ENCODE measurements at regions of chr3 and their contacts with region 1.

Region 1: DNA sequence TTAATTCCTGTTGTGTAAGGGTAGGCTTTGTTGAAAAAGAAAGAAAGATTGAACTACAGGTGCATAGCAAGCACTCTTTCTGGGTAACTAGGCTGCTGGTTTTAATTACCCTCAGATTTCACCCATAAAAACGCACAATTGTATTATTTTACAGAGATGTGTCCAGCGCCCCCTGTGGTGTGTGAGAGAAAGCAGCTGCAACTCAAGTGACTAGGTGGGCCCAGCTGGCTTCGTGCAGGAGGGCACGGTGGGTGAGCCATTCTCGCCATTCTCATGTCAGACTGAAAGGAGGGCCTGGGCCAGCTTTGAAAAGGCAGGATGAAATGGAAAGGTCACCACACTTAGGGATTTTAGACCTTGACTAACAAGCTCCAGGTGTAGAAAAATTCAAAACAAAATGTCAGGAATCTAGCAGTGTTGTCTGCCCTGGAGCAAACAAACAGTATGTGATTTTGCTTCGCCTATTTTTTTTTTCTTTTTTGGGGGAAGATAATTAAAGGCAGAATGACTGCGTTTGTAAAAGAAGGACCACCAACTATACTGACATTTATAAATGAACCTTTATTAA is 122.5 kb downstream of the LRIG1 start:
- DNase-seq: peak; percentile 60
- H3K4me3 ChIP-seq: no peak overlapping the region
- H3K27ac ChIP-seq: no peak overlapping the region; a peak in 1 of 4 replicates
- H3K4me1 ChIP-seq: peaks cover 0 to 10% of the 10 kb centered on the region in 2 experiments; a peak in 1 of 4 replicates
- H3K27me3 ChIP-seq: no peaks in the 10 kb centered on the region
- CTCF ChIP-seq: peak; percentile 68
- EP300 ChIP-seq: no peak
- RAD21 ChIP-seq: peak; percentile 49

Region 2: GRCh38 chr3:66362541-66362941 is 15.8 kb before region 1 on chr3:
- CTCF ChIA-PET with region 1: interaction called, 23 read pairs
- POLR2A ChIA-PET with region 1: no interaction called
- DNase-seq: no peak
- H3K4me3 ChIP-seq: no peak overlapping the region
- H3K27ac ChIP-seq: no peak overlapping the region
- H3K4me1 ChIP-seq: peaks cover 0 to 5% of the 10 kb centered on the region in 2 experiments; a peak in 1 of 4 replicates
- H3K27me3 ChIP-seq: no peaks in the 10 kb centered on the region
- CTCF ChIP-seq: no peak
- EP300 ChIP-seq: no peak
- RAD21 ChIP-seq: no peak

Region 3: GRCh38 chr3:66367979-66368378 is 10.4 kb before region 1 on chr3:
- CTCF ChIA-PET with region 1: interaction called, 23 read pairs
- POLR2A ChIA-PET with region 1: no interaction called
- DNase-seq: no peak
- H3K4me3 ChIP-seq: no peak overlapping the region
- H3K27ac ChIP-seq: no peak overlapping the region
- H3K4me1 ChIP-seq: peaks cover 0 to 15% of the 10 kb centered on the region in 2 experiments; a peak in 1 of 4 replicates
- H3K27me3 ChIP-seq: no peaks in the 10 kb centered on the region
- CTCF ChIP-seq: no peak
- EP300 ChIP-seq: no peak
- RAD21 ChIP-seq: no peak

Region 4: GRCh38 chr3:66394019-66394752 is 15.8 kb after region 1 on chr3:
- CTCF ChIA-PET with region 1: interaction called, 12 read pairs
- POLR2A ChIA-PET with region 1: no interaction called
- DNase-seq: no peak
- H3K4me3 ChIP-seq: no peak overlapping the region
- H3K27ac ChIP-seq: no peak overlapping the region
- H3K4me1 ChIP-seq: peaks cover 0 to 9% of the 10 kb centered on the region in 2 experiments; a peak in 2 of 4 replicates
- H3K27me3 ChIP-seq: no peaks in the 10 kb centered on the region
- CTCF ChIP-seq: no peak
- EP300 ChIP-seq: no peak
- RAD21 ChIP-seq: no peak

Region 5: GRCh38 chr3:66822186-66823008 is 444.1 kb after region 1 on chr3:
- CTCF ChIA-PET with region 1: interaction called, 12 read pairs
- POLR2A ChIA-PET with region 1: no interaction called
- DNase-seq: peak; percentile 39
- H3K4me3 ChIP-seq: peak overlapping the region in 1 of 2 experiments; percentile 2; a peak in 1 of 4 replicates
- H3K27ac ChIP-seq: no peak overlapping the region
- H3K4me1 ChIP-seq: no peaks in the 10 kb centered on the region
- H3K27me3 ChIP-seq: no peaks in the 10 kb centered on the region
- CTCF ChIP-seq: peak; percentile 72
- EP300 ChIP-seq: no peak
- RAD21 ChIP-seq: peak; percentile 55